ENCODE measurements at regions of chr5 and their contacts with region 1.

Region 1: GRCh38 chr5:116361171-116361967 is 213.3 kb downstream of the SEMA6A start:
- DNase-seq: peak; percentile 49 to 87
- H3K4me3 ChIP-seq: peak overlapping the region; percentile 27 to 60 (median 34)
- H3K27ac ChIP-seq: no peak overlapping the region
- H3K4me1 ChIP-seq: peaks cover 0 to 8% (median 2%) of the 10 kb centered on the region in 4 experiments; a peak in 6 of 7 replicates
- H3K27me3 ChIP-seq: peaks cover 0 to 5% (median 3%) of the 10 kb centered on the region in 4 experiments; a peak in 4 of 7 replicates
- CTCF ChIP-seq: peak; percentile 46 to 63 (median 60)
- EP300 ChIP-seq: 0 out of 3 replicates have a peak, but pooled peaks of 1 of the 2 experiments have one; percentile 8
- POLR2A ChIP-seq: no peak; a peak in 1 of 3 replicates
- RAD21 ChIP-seq: peak; percentile 62 to 74

Region 2: DNA sequence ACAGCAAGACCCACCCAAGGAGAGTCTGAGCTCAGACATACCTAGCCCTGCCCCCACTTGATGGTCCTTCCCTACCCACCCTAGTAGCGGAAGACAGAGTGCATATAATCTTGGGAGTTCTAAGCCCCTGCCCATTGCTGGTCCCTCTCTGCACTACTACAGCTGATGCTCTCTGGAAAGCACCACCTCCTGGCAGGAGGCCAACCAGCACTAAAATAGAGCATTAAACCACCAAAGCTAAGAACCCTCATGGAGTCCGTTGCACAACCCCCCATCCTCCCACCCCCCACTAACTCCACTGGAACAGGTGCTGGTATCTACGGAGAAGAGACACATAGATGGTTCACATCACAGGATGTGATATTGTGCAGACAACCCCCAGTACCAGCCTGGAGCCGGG is 169.7 kb before region 1 on chr5:
- CTCF ChIA-PET with region 1: no interaction called
- POLR2A ChIA-PET with region 1: no interaction called
- DNase-seq: no peak
- H3K4me3 ChIP-seq: no peak overlapping the region
- H3K27ac ChIP-seq: no peak overlapping the region
- H3K4me1 ChIP-seq: no peaks in the 10 kb centered on the region
- H3K27me3 ChIP-seq: no peaks in the 10 kb centered on the region
- CTCF ChIP-seq: no peak
- EP300 ChIP-seq: no peak
- POLR2A ChIP-seq: no peak
- RAD21 ChIP-seq: no peak

Region 3: GRCh38 chr5:116303340-116303739 is 58.0 kb before region 1 on chr5:
- CTCF ChIA-PET with region 1: no interaction called
- POLR2A ChIA-PET with region 1: no interaction called
- DNase-seq: no peak
- H3K4me3 ChIP-seq: no peak overlapping the region
- H3K27ac ChIP-seq: no peak overlapping the region
- H3K4me1 ChIP-seq: no peaks in the 10 kb centered on the region
- H3K27me3 ChIP-seq: no peaks in the 10 kb centered on the region
- CTCF ChIP-seq: no peak
- EP300 ChIP-seq: no peak
- POLR2A ChIP-seq: no peak
- RAD21 ChIP-seq: no peak

Region 4: GRCh38 chr5:116313366-116313765 is 48.0 kb before region 1 on chr5:
- CTCF ChIA-PET with region 1: no interaction called
- POLR2A ChIA-PET with region 1: no interaction called
- DNase-seq: no peak
- H3K4me3 ChIP-seq: no peak overlapping the region
- H3K27ac ChIP-seq: no peak overlapping the region
- H3K4me1 ChIP-seq: no peaks in the 10 kb centered on the region
- H3K27me3 ChIP-seq: no peaks in the 10 kb centered on the region
- CTCF ChIP-seq: no peak
- EP300 ChIP-seq: no peak
- POLR2A ChIP-seq: no peak
- RAD21 ChIP-seq: no peak

Region 5: DNA sequence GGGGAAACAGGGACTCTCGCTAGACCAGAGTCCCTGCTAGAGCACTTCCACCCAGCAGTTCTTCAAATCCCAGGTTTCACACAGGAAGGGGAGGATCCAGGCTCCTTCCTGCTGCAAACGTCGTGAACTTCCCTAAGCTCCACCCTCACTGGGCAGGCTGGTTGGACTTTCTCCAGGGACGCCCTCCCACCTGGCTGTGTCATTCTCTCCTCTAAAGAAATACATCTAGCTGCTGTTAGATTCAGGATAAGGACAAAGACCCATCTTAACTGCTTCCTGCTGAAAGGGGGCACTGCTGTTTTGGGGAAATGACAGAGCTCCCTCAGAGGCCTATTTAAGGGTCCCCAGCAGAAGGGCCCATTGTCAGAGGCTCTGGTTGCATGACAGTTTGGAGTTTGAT is 17.4 kb before region 1 on chr5:
- CTCF ChIA-PET with region 1: interaction called, 13 read pairs
- POLR2A ChIA-PET with region 1: interaction called, 3 read pairs
- DNase-seq: peak; percentile 57 to 67
- H3K4me3 ChIP-seq: no peak overlapping the region
- H3K27ac ChIP-seq: no peak overlapping the region
- H3K4me1 ChIP-seq: no peaks in the 10 kb centered on the region; a peak in 1 of 7 replicates
- H3K27me3 ChIP-seq: no peaks in the 10 kb centered on the region
- CTCF ChIP-seq: peak in 1 of 3 experiments; percentile 27; a peak in 2 of 4 replicates
- EP300 ChIP-seq: no peak
- POLR2A ChIP-seq: no peak
- RAD21 ChIP-seq: peak; percentile 35 to 54; a peak in 3 of 4 replicates

Region 6: DNA sequence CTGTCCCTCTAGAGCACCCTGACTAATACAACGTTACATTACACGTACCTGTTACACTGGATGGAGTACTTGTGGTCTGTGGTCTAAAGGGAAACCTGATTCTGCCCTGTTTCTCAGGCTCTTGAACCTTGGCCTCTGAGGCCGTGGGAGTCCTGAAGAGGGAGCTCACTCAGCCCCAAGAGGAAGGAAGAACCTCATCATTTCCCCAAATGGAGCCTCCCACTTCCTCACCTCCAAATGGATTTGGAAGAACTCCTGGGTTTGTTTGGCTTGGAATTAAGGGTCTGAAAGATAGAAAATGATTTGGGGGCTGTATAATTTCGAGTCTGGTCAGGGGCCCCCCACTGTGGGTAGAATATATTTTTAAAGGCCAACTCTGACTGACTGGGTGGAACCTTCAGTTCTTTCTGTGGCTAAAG is 13.1 kb after region 1 on chr5:
- CTCF ChIA-PET with region 1: interaction called, 13 read pairs
- POLR2A ChIA-PET with region 1: interaction called, 4 read pairs
- DNase-seq: no peak
- H3K4me3 ChIP-seq: no peak overlapping the region
- H3K27ac ChIP-seq: no peak overlapping the region
- H3K4me1 ChIP-seq: peaks cover 0 to 14% (median 7%) of the 10 kb centered on the region in 4 experiments; a peak in 4 of 7 replicates
- H3K27me3 ChIP-seq: no peaks in the 10 kb centered on the region
- CTCF ChIP-seq: no peak
- EP300 ChIP-seq: no peak
- POLR2A ChIP-seq: no peak
- RAD21 ChIP-seq: no peak; a peak in 1 of 4 replicates

Measured in H1 (cell line).